ENCODE measurements at regions of chr2 and their contacts with region 1.

Region 1: GRCh38 chr2:138867341-138867740 is 87.2 kb upstream of the NXPH2 start:
- DNase-seq: no peak
- H3K4me3 ChIP-seq: no peak overlapping the region
- H3K27ac ChIP-seq: no peak overlapping the region
- H3K4me1 ChIP-seq: no peaks in the 10 kb centered on the region; a peak in 1 of 4 replicates
- H3K27me3 ChIP-seq: no peaks in the 10 kb centered on the region
- CTCF ChIP-seq: no peak
- EP300 ChIP-seq: no peak
- RAD21 ChIP-seq: no peak

Region 2: GRCh38 chr2:138846223-138846821 is 21.0 kb before region 1 on chr2:
- CTCF ChIA-PET with region 1: interaction called, 11 read pairs
- POLR2A ChIA-PET with region 1: no interaction called
- DNase-seq: peak; percentile 47
- H3K4me3 ChIP-seq: no peak overlapping the region
- H3K27ac ChIP-seq: no peak overlapping the region
- H3K4me1 ChIP-seq: no peaks in the 10 kb centered on the region
- H3K27me3 ChIP-seq: no peaks in the 10 kb centered on the region
- CTCF ChIP-seq: peak; percentile 86
- EP300 ChIP-seq: no peak
- RAD21 ChIP-seq: peak; percentile 72

Region 3: GRCh38 chr2:139007130-139007529 is 139.8 kb after region 1 on chr2:
- CTCF ChIA-PET with region 1: no interaction called
- POLR2A ChIA-PET with region 1: no interaction called
- DNase-seq: no peak
- H3K4me3 ChIP-seq: no peak overlapping the region
- H3K27ac ChIP-seq: no peak overlapping the region
- H3K4me1 ChIP-seq: no peaks in the 10 kb centered on the region
- H3K27me3 ChIP-seq: no peaks in the 10 kb centered on the region
- CTCF ChIP-seq: no peak
- EP300 ChIP-seq: no peak
- RAD21 ChIP-seq: no peak